Endothelial cell of umbilical vein (primary cell): ENCODE measurements at regions of chr5 and their contacts with region 1.

Region 1: GRCh38 chr5:14270209-14270702 is 127.1 kb downstream of the TRIO start:
- DNase-seq: peak; percentile 75
- H3K4me3 ChIP-seq: no peak overlapping the region
- H3K27ac ChIP-seq: peak overlapping the region; percentile 76
- H3K4me1 ChIP-seq: peaks cover 52% of the 10 kb centered on the region
- H3K27me3 ChIP-seq: no peaks in the 10 kb centered on the region
- CTCF ChIP-seq: peak; percentile 73 to 74
- POLR2A ChIP-seq: no peak

Region 2: GRCh38 chr5:14035859-14036440 is 234.3 kb before region 1 on chr5:
- CTCF ChIA-PET with region 1: interaction called, 12 read pairs
- POLR2A ChIA-PET with region 1: no interaction called
- dilution Hi-C with region 1: no loop called
- intact Hi-C with region 1: loop called (anchors 1 kb)
- DNase-seq: peak; percentile 96
- H3K4me3 ChIP-seq: peak overlapping the region in 1 of 3 experiments; percentile 29
- H3K27ac ChIP-seq: peak overlapping the region; percentile 93
- H3K4me1 ChIP-seq: peaks cover 54% of the 10 kb centered on the region
- H3K27me3 ChIP-seq: no peaks in the 10 kb centered on the region
- CTCF ChIP-seq: no peak
- POLR2A ChIP-seq: no peak

Region 3: DNA sequence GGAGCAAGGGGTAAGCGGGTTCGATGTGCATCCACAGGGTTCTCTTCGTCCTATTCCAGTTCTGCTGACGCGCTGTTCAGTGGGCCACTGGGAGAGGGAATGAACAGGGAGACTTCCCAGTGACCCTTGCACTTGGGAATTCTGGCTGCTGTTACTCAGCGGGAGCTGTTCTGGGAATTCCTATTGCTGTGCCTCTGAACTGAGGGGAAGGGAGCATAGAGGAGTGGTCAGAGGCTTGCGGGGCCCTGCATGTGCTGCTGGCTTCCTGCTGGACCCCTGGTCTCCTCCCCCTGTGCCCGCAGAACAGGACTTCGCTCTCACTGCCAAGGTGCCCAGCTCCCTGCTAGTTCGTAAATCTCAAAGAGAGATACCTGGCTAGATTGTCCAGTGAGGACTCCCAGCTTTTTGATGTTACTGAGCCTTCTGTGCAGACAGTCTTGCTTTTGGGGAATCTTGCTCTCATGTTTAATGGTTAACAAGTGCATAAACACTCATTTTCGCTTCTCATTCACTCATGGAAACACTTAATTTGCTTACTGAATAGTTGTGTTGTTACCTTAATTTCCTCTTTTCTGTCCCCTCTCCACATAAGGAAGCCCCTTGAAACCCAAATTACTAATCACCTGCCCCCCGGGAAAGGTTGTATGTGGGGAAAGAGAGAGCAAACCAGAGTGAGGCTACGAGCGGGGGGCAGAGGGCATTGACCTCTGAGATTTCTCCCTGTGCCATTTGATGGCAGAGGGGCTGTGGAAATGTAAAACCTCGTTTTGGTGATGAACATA is 121.2 kb before region 1 on chr5:
- CTCF ChIA-PET with region 1: interaction called, 38 read pairs
- POLR2A ChIA-PET with region 1: interaction called, 3 read pairs
- dilution Hi-C with region 1: loop called (anchors 25 kb)
- intact Hi-C with region 1: no loop called
- DNase-seq: no peak
- H3K4me3 ChIP-seq: no peak overlapping the region
- H3K27ac ChIP-seq: no peak overlapping the region
- H3K4me1 ChIP-seq: peaks cover 72% of the 10 kb centered on the region
- H3K27me3 ChIP-seq: no peaks in the 10 kb centered on the region
- CTCF ChIP-seq: no peak
- POLR2A ChIP-seq: no peak

Region 4: DNA sequence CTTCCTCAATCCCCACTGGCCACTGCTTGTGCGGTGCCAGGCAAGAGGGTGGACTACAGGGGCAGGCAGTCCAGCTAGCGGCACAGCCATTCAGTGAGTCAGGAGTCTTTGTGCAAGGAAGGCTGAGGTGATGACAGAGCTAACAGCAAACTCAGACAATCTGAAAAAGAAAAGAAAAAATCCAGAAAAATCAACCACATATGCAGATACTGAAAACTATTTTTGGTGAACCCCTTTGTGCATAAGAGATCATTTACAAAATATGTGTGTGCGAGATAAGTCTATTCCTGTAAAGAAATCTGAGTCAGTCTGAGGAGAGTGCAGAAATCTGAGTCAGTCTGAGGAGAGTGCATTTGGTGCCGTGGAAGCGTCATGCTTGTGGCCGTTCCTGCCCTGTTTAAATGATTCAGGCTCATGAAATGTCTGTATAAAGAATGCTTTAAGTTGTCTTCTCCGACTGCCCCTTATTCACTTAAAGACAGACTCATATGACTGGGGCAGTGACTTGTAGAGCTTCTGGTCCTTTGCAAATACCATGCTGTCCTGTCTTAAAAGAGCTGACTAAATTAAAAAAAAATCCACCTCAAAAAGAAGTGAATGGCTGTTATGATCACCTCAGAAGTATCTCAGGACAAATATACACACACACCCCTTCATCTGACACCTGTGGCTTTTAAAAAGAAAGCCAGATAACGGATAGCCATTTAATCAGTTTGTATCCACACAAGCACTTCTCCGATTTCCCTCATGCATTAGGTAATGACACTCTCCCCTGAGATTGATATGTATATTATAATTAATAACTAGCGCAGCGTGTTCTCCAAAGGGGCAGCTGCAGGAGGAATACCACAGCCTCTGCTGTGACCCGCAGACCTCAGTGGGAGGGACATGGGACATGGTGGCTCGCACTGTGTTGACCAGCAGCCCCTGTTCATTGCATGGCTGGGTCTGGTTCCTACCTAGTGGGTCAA is 79.8 kb before region 1 on chr5:
- CTCF ChIA-PET with region 1: interaction called, 25 read pairs
- POLR2A ChIA-PET with region 1: no interaction called
- dilution Hi-C with region 1: no loop called
- intact Hi-C with region 1: loop called (anchors 1 kb)
- DNase-seq: peak; percentile 93
- H3K4me3 ChIP-seq: no peak overlapping the region
- H3K27ac ChIP-seq: peak overlapping the region; percentile 74
- H3K4me1 ChIP-seq: peaks cover 86% of the 10 kb centered on the region
- H3K27me3 ChIP-seq: no peaks in the 10 kb centered on the region
- CTCF ChIP-seq: no peak
- POLR2A ChIP-seq: no peak

Region 5: GRCh38 chr5:14250084-14250695 is 20.1 kb before region 1 on chr5:
- CTCF ChIA-PET with region 1: interaction called, 11 read pairs
- POLR2A ChIA-PET with region 1: no interaction called
- dilution Hi-C with region 1: no loop called
- intact Hi-C with region 1: no loop called
- DNase-seq: no peak
- H3K4me3 ChIP-seq: no peak overlapping the region
- H3K27ac ChIP-seq: no peak overlapping the region
- H3K4me1 ChIP-seq: peaks cover 12% of the 10 kb centered on the region
- H3K27me3 ChIP-seq: no peaks in the 10 kb centered on the region
- CTCF ChIP-seq: no peak
- POLR2A ChIP-seq: no peak

Region 6: DNA sequence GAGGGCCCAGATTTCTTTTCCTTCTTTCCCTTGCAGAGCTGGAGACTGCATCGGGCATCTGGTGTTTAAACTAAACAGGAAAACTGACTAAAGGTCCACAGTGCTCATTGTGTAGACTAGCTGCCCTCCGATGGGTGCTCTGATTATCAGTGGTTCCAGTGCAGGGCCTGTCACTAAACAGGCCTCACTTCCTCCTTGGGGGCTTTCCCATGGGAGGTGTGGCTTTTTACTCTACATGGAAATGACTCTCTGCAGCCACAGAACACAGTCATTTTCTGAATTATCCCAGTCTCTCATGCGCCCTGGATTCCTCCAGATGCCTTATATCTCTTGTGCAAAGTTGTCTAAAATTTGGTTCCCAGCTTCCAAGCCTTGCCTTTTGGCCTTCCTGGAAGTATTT is 72.0 kb after region 1 on chr5:
- CTCF ChIA-PET with region 1: no interaction called
- POLR2A ChIA-PET with region 1: no interaction called
- dilution Hi-C with region 1: no loop called
- intact Hi-C with region 1: no loop called
- DNase-seq: peak; percentile 77
- H3K4me3 ChIP-seq: no peak overlapping the region
- H3K27ac ChIP-seq: peak overlapping the region; percentile 4
- H3K4me1 ChIP-seq: peaks cover 19% of the 10 kb centered on the region
- H3K27me3 ChIP-seq: no peaks in the 10 kb centered on the region
- CTCF ChIP-seq: no peak
- POLR2A ChIP-seq: no peak

Region 7: DNA sequence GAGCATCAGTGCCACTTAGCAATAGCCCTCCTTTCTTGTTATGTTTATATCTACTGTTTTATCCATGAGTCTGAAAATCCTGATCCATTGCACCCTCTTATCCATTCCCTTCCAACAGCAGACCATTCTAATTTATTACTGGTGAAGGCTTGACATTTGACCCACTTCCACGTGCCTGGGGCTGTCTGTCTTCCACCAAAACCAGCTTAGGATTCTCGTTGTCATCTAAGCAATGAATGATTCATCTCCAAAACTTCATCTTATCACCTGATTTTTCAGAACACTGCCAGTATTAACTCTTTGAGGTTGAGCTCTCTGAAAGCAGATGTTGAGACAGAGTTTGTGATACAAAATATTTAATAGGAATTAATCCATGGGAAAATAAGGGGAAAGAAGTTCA is 951.9 kb after region 1 on chr5:
- CTCF ChIA-PET with region 1: no interaction called
- POLR2A ChIA-PET with region 1: no interaction called
- dilution Hi-C with region 1: no loop called
- intact Hi-C with region 1: no loop called
- DNase-seq: no peak
- H3K4me3 ChIP-seq: no peak overlapping the region
- H3K27ac ChIP-seq: no peak overlapping the region
- H3K4me1 ChIP-seq: no peaks in the 10 kb centered on the region
- H3K27me3 ChIP-seq: peaks cover 0 to 2% of the 10 kb centered on the region in 2 experiments
- CTCF ChIP-seq: no peak
- POLR2A ChIP-seq: no peak